Activated B cell treated with CpG ODN at 0.5 μM for 24 hours (primary cell): ENCODE measurements at regions of chr18 and their contacts with region 1.

Region 1: DNA sequence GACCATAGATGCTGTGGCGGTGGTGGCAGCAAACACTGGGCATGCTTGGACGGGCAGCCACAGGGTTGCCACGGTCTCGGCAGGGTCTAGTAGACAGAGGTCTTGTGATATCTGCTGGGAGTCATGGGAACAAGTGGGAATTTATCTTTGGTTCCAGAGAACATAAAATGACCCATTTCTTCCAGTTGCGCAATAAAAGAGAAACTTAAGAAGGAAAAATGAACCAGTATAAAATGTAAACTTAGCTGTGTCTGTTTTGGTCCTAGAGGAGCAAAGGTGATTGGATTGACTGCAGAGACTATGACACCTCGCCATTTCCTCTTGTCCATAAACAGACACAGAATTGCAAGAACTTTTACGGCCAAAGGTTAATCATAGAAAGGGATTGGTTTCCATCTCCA is 132.6 kb upstream of the RBBP8 start:
- DNase-seq: no peak
- ATAC-seq: no peak
- H3K4me3 Mint-ChIP-seq: no peak overlapping the region
- H3K27ac Mint-ChIP-seq: no peak overlapping the region
- H3K4me1 Mint-ChIP-seq: no peaks in the 10 kb centered on the region
- H3K27me3 Mint-ChIP-seq: peaks cover 7% of the 10 kb centered on the region
- CTCF ChIP-seq: no peak

Region 2: DNA sequence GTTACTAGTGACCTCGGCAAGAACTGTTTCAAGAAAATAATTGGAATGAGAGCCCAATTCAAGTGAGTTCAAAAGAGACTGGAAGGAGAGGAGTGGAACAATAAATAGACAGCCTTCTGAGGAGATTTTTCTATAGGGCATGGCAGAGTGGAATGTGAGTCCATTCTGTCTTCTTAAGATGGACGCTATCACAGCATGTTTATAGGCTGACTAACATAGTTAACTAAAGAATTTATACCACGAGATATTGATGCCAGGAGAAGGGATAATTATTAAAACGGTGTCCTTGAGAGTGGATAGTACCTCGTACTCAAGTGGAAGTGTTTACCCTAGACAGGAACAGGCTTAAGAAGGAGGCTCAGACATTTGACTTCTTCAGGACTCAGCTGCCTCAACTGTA is 11.0 kb before region 1 on chr18:
- CTCF ChIA-PET with region 1: interaction called, 16 read pairs
- POLR2A ChIA-PET with region 1: no interaction called
- intact Hi-C with region 1: no loop called
- DNase-seq: no peak
- ATAC-seq: no peak
- H3K4me3 Mint-ChIP-seq: no peak overlapping the region
- H3K27ac Mint-ChIP-seq: no peak overlapping the region
- H3K4me1 Mint-ChIP-seq: peaks cover 29% of the 10 kb centered on the region
- H3K27me3 Mint-ChIP-seq: no peaks in the 10 kb centered on the region
- CTCF ChIP-seq: no peak

Region 3: GRCh38 chr18:23356915-23357601 is 556.5 kb after region 1 on chr18:
- CTCF ChIA-PET with region 1: no interaction called
- POLR2A ChIA-PET with region 1: no interaction called
- intact Hi-C with region 1: loop called (anchors 2 kb)
- DNase-seq: no peak
- ATAC-seq: no peak
- H3K4me3 Mint-ChIP-seq: no peak overlapping the region
- H3K27ac Mint-ChIP-seq: no peak overlapping the region
- H3K4me1 Mint-ChIP-seq: peaks cover 33% of the 10 kb centered on the region
- H3K27me3 Mint-ChIP-seq: no peaks in the 10 kb centered on the region
- CTCF ChIP-seq: no peak

Region 4: GRCh38 chr18:23412351-23412964 is 611.9 kb after region 1 on chr18:
- CTCF ChIA-PET with region 1: interaction called, 46 read pairs
- POLR2A ChIA-PET with region 1: no interaction called
- intact Hi-C with region 1: loop called (anchors 1 kb)
- DNase-seq: no peak
- ATAC-seq: no peak
- H3K4me3 Mint-ChIP-seq: no peak overlapping the region
- H3K27ac Mint-ChIP-seq: no peak overlapping the region
- H3K4me1 Mint-ChIP-seq: peaks cover 7% of the 10 kb centered on the region
- H3K27me3 Mint-ChIP-seq: no peaks in the 10 kb centered on the region
- CTCF ChIP-seq: no peak

Region 5: GRCh38 chr18:24118750-24119577 is 1318.4 kb after region 1 on chr18:
- CTCF ChIA-PET with region 1: no interaction called
- POLR2A ChIA-PET with region 1: no interaction called
- intact Hi-C with region 1: loop called (anchors 2 kb)
- DNase-seq: peak; percentile 40
- ATAC-seq: peak; percentile 77
- H3K4me3 Mint-ChIP-seq: no peak overlapping the region
- H3K27ac Mint-ChIP-seq: no peak overlapping the region
- H3K4me1 Mint-ChIP-seq: peaks cover 9% of the 10 kb centered on the region
- H3K27me3 Mint-ChIP-seq: no peaks in the 10 kb centered on the region
- CTCF ChIP-seq: no peak